ENCODE measurements at regions of chr11 and their contacts with region 1.

Region 1: DNA sequence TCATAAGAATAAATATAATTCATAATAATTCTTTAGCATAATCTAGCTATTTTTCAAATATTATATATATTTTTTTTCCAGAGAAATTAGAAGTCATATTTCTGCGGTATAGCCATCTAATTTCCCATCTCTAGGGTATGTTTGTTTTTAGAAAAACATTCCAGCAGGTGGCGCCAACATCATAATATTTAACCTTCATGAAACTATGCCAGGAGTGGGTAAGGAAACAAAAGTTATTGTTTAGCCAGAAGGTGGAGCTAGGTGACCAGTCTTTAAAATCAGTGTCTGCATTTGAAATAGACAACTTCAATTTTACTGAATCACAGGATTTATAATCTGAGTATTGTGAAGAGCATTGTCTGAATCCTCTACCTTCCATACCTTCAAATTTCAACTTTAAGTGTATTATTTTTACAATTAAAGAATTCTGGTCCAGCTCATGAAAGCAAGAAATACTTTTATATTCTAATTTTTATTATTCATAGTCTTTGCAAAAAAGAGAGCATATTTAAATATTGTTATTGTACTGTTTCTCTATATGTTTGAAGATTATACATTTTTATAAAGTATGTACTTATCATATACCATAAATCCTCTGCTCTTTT is 15.7 kb upstream of the CCDC179 start:
- H3K4me3 ChIP-seq: no peak overlapping the region
- H3K27ac ChIP-seq: no peak overlapping the region
- H3K4me1 ChIP-seq: no peaks in the 10 kb centered on the region
- CTCF ChIP-seq: no peak

Region 2: DNA sequence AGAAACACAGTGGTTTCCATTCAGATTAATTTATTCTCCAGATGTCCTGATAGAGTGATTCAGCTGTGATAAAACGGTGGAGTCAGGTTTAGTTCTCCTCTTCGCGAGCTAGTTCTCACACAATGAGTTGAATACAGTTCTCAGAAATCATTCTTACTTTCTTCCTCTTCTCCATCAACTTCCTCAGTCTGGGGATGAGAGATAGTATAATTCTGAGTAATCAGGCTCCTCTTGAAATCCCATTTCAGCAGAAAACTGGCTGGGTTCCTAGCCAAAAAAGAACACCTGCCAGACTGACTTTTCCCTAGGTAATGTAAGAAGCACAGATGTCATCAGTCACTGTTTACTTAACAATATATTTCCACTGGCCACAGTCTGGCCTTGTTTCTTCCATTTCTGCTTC is 123.1 kb before region 1 on chr11:
- CTCF ChIA-PET with region 1: no interaction called
- POLR2A ChIA-PET with region 1: no interaction called
- H3K4me3 ChIP-seq: no peak overlapping the region
- H3K27ac ChIP-seq: no peak overlapping the region
- H3K4me1 ChIP-seq: no peaks in the 10 kb centered on the region
- CTCF ChIP-seq: no peak

Region 3: GRCh38 chr11:22851477-22851876 is 24.5 kb before region 1 on chr11:
- CTCF ChIA-PET with region 1: interaction called, 10 read pairs
- POLR2A ChIA-PET with region 1: no interaction called
- H3K4me3 ChIP-seq: no peak overlapping the region
- H3K27ac ChIP-seq: no peak overlapping the region
- H3K4me1 ChIP-seq: no peaks in the 10 kb centered on the region
- CTCF ChIP-seq: no peak

Region 4: DNA sequence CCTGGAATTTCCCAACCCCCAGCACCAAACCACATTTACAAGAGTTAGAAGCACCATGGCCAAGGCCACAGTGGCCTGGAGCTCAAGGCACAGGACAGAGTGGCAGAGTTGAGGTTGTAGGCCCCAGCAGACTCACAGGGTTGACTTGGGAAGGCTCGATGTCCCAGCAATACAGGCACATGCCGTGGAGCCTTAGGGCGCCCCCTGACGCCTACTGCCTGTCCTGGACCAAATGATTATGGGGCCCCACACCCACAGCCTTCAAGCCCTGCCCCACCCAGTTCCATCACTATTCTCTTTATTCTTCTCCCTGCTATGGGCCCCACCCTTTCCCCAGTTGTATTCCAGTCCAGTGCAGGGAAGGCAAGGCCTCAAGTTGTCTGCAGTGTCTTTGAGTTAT is 15.7 kb before region 1 on chr11 and contains the start of gene CCDC179:
- CTCF ChIA-PET with region 1: interaction called, 19 read pairs
- POLR2A ChIA-PET with region 1: no interaction called
- H3K4me3 ChIP-seq: no peak within 1 kb of the TSS
- H3K27ac ChIP-seq: no peak within 1 kb of the TSS
- H3K4me1 ChIP-seq: no peaks in the 10 kb centered on the region
- CTCF ChIP-seq: no peak

Region 5: GRCh38 chr11:22928207-22928917 is 52.4 kb after region 1 on chr11:
- CTCF ChIA-PET with region 1: interaction called, 19 read pairs
- POLR2A ChIA-PET with region 1: no interaction called
- H3K4me3 ChIP-seq: no peak overlapping the region
- H3K27ac ChIP-seq: no peak overlapping the region
- H3K4me1 ChIP-seq: no peaks in the 10 kb centered on the region
- CTCF ChIP-seq: no peak

Measured in HEK293 (cell line).